Caco-2 (cell line): ENCODE measurements at regions of chr17 and their contacts with region 1.

Region 1: GRCh38 chr17:48997083-48997826 is at the start of gene IGF2BP1:
- DNase-seq: peak; percentile 93 to 95
- H3K4me3 ChIP-seq: peak within 1 kb of the TSS; percentile 82
- H3K4me3 Mint-ChIP-seq: peak within 1 kb of the TSS; percentile 86
- H3K27ac Mint-ChIP-seq: peak within 1 kb of the TSS; percentile 94
- H3K4me1 ChIP-seq: peaks cover 38% of the 10 kb centered on the region
- H3K4me1 Mint-ChIP-seq: peaks cover 40% of the 10 kb centered on the region
- H3K27me3 ChIP-seq: no peaks in the 10 kb centered on the region
- H3K27me3 Mint-ChIP-seq: no peaks in the 10 kb centered on the region
- CTCF ChIP-seq: no peak
- total RNA-seq, gene IGF2BP1: 583 and 601 TPM in 2 replicates

Region 2: DNA sequence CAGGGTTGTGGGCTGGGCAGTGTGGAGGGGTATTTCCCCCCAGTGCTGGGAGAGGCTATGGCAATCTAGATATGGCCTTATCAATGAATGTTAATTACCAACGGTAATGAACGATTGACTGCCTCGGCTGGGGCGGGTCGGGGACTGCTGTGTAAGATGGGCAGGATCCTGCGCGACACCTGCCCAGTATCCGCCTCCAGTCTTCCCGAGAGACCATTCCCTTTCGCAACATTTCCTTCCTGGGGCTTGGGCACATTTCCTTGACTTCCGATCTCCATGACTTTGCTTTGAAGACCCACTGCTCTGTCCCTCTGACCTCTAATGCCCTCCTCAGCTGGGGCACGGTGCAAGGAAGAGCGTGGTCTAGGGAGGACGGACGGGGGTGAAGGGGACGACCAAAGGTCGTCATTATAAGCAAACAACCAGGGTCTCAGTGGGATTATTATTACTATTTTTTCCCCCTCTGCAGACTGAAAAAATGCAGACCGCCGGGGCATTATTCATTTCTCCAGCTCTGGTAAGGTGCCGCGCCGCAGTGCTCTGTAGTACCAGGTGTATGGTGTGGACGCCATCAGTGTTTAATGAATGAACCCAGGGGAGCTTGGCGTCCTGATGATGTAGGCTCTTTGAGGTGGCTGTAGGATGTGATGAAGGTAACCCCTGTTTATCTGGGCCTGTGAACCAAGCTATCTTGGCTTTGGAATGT is 104.2 kb before region 1 on chr17:
- CTCF ChIA-PET with region 1: interaction called, 6 read pairs
- POLR2A ChIA-PET with region 1: interaction called, 48 read pairs
- intact Hi-C with region 1: loop called (anchors 1 kb)
- DNase-seq: no peak
- H3K4me3 ChIP-seq: peak overlapping the region; percentile 73
- H3K4me3 Mint-ChIP-seq: peak overlapping the region; percentile 84
- H3K27ac Mint-ChIP-seq: peak overlapping the region; percentile 90
- H3K4me1 ChIP-seq: peaks cover 13% of the 10 kb centered on the region
- H3K4me1 Mint-ChIP-seq: peaks cover 12% of the 10 kb centered on the region
- H3K27me3 ChIP-seq: no peaks in the 10 kb centered on the region
- H3K27me3 Mint-ChIP-seq: peaks cover 2% of the 10 kb centered on the region
- CTCF ChIP-seq: no peak

Region 3: GRCh38 chr17:48954300-48954755 is 42.9 kb before region 1 on chr17:
- CTCF ChIA-PET with region 1: interaction called, 43 read pairs
- POLR2A ChIA-PET with region 1: interaction called, 15 read pairs
- intact Hi-C with region 1: loop called (anchors 1 kb)
- DNase-seq: peak; percentile 89 to 91
- H3K4me3 ChIP-seq: no peak overlapping the region
- H3K4me3 Mint-ChIP-seq: no peak overlapping the region
- H3K27ac Mint-ChIP-seq: peak overlapping the region; percentile 47
- H3K4me1 ChIP-seq: peaks cover 13% of the 10 kb centered on the region
- H3K4me1 Mint-ChIP-seq: peaks cover 10% of the 10 kb centered on the region
- H3K27me3 ChIP-seq: no peaks in the 10 kb centered on the region
- H3K27me3 Mint-ChIP-seq: no peaks in the 10 kb centered on the region
- CTCF ChIP-seq: peak; percentile 94 to 97

Region 4: GRCh38 chr17:48970224-48970623 is 27.0 kb before region 1 on chr17:
- CTCF ChIA-PET with region 1: interaction called, 10 read pairs
- POLR2A ChIA-PET with region 1: interaction called, 73 read pairs
- intact Hi-C with region 1: loop called (anchors 1 kb)
- DNase-seq: peak in 1 of 2 experiments; percentile 43
- H3K4me3 ChIP-seq: no peak overlapping the region
- H3K4me3 Mint-ChIP-seq: no peak overlapping the region
- H3K27ac Mint-ChIP-seq: peak overlapping the region; percentile 97
- H3K4me1 ChIP-seq: peaks cover 38% of the 10 kb centered on the region
- H3K4me1 Mint-ChIP-seq: peaks cover 46% of the 10 kb centered on the region
- H3K27me3 ChIP-seq: no peaks in the 10 kb centered on the region
- H3K27me3 Mint-ChIP-seq: no peaks in the 10 kb centered on the region
- CTCF ChIP-seq: no peak

Region 5: GRCh38 chr17:49022391-49022941 is 25.2 kb after region 1 on chr17:
- CTCF ChIA-PET with region 1: interaction called, 136 read pairs
- POLR2A ChIA-PET with region 1: interaction called, 20 read pairs
- intact Hi-C with region 1: loop called (anchors 1 kb)
- DNase-seq: peak; percentile 98 to 99
- H3K4me3 ChIP-seq: no peak overlapping the region
- H3K4me3 Mint-ChIP-seq: peak overlapping the region; percentile 44
- H3K27ac Mint-ChIP-seq: peak overlapping the region; percentile 87
- H3K4me1 ChIP-seq: peaks cover 83% of the 10 kb centered on the region
- H3K4me1 Mint-ChIP-seq: peaks cover 86% of the 10 kb centered on the region
- H3K27me3 ChIP-seq: no peaks in the 10 kb centered on the region
- H3K27me3 Mint-ChIP-seq: no peaks in the 10 kb centered on the region
- CTCF ChIP-seq: no peak

Region 6: GRCh38 chr17:49361902-49362722 is 364.9 kb after region 1 on chr17 and contains the start of gene ZNF652:
- CTCF ChIA-PET with region 1: no interaction called
- POLR2A ChIA-PET with region 1: interaction called, 13 read pairs
- intact Hi-C with region 1: no loop called
- DNase-seq: peak; percentile 100
- H3K4me3 ChIP-seq: peak within 1 kb of the TSS; percentile 64
- H3K4me3 Mint-ChIP-seq: peak within 1 kb of the TSS; percentile 77
- H3K27ac Mint-ChIP-seq: peak within 1 kb of the TSS; percentile 76
- H3K4me1 ChIP-seq: peaks cover 26% of the 10 kb centered on the region
- H3K4me1 Mint-ChIP-seq: peaks cover 27% of the 10 kb centered on the region
- H3K27me3 ChIP-seq: no peaks in the 10 kb centered on the region
- H3K27me3 Mint-ChIP-seq: no peaks in the 10 kb centered on the region
- CTCF ChIP-seq: no peak
- total RNA-seq, gene ZNF652: 89.3 and 92.6 TPM in 2 replicates